ENCODE measurements at regions of chr14 and their contacts with region 1.

Region 1: GRCh38 chr14:59632381-59632780 is 55.8 kb upstream of the CCDC175 start:
- DNase-seq: peak in 2 of 10 donors; percentile 32 to 52
- H3K4me3 ChIP-seq: no peak overlapping the region
- H3K27ac ChIP-seq: peak overlapping the region in 12 of 59 donors; percentile 5 to 73 (median 20)
- H3K27me3 ChIP-seq: no peaks in the 10 kb centered on the region
- CTCF ChIP-seq: peak in 54 of 56 donors; percentile 29 to 74 (median 54)

Region 2: DNA sequence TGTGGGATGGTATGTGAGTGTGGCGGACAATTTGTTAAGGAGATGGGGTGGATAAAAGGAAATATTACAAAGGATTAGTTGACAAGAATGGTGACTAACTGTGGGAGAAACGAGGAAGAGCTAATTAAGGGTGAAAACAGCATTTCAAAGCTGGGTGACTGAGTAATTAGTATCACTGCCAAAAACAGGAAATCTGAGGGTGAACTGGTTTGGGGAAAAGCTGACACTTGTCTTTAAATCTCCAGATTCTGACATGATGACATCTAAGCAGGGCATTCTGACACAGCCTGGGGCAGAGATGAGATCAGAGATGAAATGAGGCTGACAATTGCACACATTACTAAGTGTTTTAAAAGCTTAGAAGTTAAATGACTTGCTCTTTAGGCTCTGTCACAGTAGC is 13.3 kb before region 1 on chr14:
- intact Hi-C with region 1: no loop called
- DNase-seq: no peak
- H3K4me3 ChIP-seq: no peak overlapping the region
- H3K27ac ChIP-seq: no peak overlapping the region
- H3K27me3 ChIP-seq: no peaks in the 10 kb centered on the region
- CTCF ChIP-seq: no peak

Region 3: DNA sequence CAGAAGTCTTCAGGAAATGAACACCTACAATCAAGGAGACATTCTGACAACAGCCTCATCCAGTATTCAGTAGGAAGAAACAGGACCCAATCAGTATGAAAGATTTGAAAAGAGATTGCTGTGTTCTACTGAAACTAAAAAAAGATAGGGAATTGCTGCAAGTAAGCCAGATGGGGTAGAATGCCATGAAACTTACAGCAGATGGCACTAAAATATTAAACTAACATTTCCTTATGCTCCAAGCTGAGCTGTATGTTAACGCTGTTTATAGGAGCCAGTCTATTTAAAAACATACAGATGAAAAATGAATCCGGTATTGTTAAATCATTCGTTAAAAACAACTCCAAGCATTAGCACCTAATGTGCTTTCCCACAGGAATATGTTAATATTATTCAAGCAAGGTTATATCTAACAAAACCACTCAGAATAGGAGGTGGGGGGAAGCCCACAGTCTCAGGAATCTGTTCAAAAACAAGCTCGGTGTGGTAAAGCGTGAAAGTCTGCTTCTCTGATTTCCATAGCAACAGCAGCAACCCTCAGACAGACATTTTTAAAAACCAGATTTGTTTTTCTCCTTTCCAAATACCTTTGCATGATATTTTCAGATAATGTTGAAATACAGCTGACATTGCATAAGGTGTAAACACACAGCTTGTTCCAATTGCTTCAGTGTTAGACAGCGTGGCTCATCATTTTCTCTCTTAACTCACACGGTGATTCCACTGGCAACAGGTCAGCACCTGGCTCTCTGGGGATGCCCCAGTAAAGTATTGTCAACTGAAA is 75.6 kb after region 1 on chr14:
- intact Hi-C with region 1: loop called in 1 of 2 experiments (anchors 2 kb)
- DNase-seq: peak in 2 of 10 donors; percentile 30 to 39
- H3K4me3 ChIP-seq: peak overlapping the region in 36 of 59 donors; percentile 0 to 46 (median 24)
- H3K27ac ChIP-seq: peak overlapping the region in 53 of 59 donors; percentile 4 to 87 (median 68)
- H3K27me3 ChIP-seq: no peaks in the 10 kb centered on the region
- CTCF ChIP-seq: peak in 54 of 56 donors; percentile 9 to 60 (median 43)

Region 4: GRCh38 chr14:59728321-59728720 is 95.9 kb after region 1 on chr14:
- intact Hi-C with region 1: no loop called
- DNase-seq: peak in 1 of 10 donors; percentile 18
- H3K4me3 ChIP-seq: no peak overlapping the region
- H3K27ac ChIP-seq: peak overlapping the region in 4 of 59 donors; percentile 5 to 29 (median 26)
- H3K27me3 ChIP-seq: no peaks in the 10 kb centered on the region
- CTCF ChIP-seq: no peak

Region 5: GRCh38 chr14:59870277-59871165 is 238.1 kb after region 1 on chr14 and contains the start of gene RTN1:
- intact Hi-C with region 1: loop called in 1 of 2 experiments (anchors 10 kb)
- DNase-seq: peak; percentile 60 to 89 (median 78)
- H3K4me3 ChIP-seq: peak within 1 kb of the TSS; percentile 61 to 93 (median 82)
- H3K27ac ChIP-seq: peak within 1 kb of the TSS; percentile 70 to 96 (median 90)
- H3K27me3 ChIP-seq: no peaks in the 10 kb centered on the region
- CTCF ChIP-seq: peak in 20 of 56 donors; percentile 6 to 37 (median 20)
- total RNA-seq, gene RTN1: 194 to 1,123 (median 809) TPM

Region 6: GRCh38 chr14:59918824-59919569 is 286.6 kb after region 1 on chr14:
- intact Hi-C with region 1: loop called in 1 of 2 experiments (anchors 10 kb)
- DNase-seq: peak in 5 of 10 donors; percentile 10 to 44 (median 39)
- H3K4me3 ChIP-seq: peak overlapping the region; percentile 42 to 84 (median 67)
- H3K27ac ChIP-seq: peak overlapping the region in 47 of 59 donors; percentile 3 to 82 (median 57)
- H3K27me3 ChIP-seq: peaks cover 0 to 4% (median 0%) of the 10 kb centered on the region in 45 donors
- CTCF ChIP-seq: peak; percentile 19 to 78 (median 63)

Measured in dorsolateral prefrontal cortex (tissue), 120 donors.